Activated naive CD4-positive, alpha-beta T cell treated with anti-CD3 and anti-CD28 coated beads for 36 hours (primary cell): ENCODE measurements at regions of chr19 and their contacts with region 1.

Region 1: DNA sequence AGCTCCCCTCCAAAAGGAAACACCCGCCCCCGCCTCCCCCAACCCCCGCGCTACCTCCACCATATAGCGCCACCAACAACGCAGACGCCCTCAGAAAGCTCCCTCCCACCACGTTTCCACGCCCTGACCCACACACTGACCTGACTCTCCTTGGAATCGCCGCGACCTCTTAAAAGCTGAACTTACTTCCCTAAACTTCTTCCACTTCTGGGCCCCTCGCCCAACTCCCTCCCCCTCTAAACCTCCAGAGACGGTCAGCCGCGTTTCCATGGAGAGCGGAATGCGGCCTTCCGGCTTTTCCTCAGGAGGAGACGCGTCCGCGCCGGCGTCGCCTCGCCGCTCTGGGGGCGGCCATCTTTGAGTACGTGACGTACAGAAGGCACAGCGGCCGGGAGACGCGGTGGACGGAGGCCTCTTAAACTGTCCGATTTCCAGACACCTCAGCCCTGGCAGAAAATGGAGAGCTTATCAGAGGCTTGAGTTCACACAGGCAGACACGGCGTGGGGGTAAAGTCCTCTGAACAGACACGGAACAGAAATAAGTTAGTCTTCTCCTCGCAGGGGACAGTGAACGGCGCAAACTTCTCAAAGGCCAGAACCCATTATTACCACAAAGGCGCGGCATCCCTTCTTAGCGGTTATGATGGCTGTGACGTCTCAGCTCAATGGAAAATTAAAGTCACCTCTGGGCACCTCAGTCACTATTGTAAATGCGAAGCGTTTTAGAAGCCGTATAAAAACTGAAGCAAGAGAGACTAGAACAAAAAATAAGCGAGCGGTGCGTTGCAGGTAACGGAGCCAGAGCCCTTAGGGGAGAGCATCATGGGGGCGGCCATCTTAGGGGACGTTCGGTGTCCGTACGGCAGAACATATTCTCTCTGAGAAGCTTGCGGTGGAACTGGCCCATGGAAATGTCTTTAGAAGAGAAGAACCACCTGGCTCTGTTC is at the start of gene ZNF432:
- DNase-seq: peak; percentile 82
- H3K4me3 Mint-ChIP-seq: peak within 1 kb of the TSS; percentile 93
- H3K27ac Mint-ChIP-seq: peak within 1 kb of the TSS; percentile 99
- H3K4me1 Mint-ChIP-seq: peaks cover 11% of the 10 kb centered on the region
- H3K27me3 Mint-ChIP-seq: no peaks in the 10 kb centered on the region
- total RNA-seq, gene ZNF432: 6.2 to 6.7 TPM

Region 2: DNA sequence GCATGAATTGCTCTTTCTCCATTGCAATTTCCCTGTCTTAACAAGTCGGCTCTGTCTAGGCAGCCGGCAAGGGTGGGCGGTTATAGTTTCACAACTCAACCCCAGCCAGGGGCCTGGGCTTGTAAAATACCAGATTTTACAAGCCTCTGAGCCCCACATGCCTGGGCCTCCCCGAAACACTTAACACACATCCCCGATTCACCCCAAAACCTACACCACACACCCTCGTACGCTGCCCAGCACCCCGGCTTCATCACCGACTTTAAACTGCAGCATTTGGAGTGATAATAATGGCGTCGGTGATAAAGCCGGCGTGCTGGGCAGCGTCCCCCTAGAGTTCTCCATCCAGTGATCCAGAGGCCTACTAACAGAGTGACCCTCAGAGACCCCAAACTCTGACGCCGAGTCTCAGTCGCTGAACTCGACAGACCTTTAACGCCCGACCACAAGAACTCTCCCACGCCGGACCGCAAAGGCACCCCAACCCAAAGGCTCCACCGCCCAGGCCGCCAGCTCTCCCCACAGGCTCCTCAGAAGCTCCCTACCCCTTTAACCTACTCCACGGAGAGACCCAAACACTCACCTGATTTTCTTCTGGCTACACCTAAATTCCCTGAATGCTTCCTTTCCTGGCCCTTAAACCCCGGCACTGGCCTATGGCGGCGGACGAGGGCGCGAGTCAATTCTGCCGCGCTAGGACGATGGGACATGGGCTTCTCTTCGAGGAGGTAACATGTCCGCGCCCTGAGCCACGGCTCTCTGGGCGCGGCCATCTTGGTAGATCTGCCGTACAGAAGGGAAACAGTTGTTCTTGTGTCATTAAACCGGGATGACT is 144.3 kb before region 1 on chr19 and contains the start of gene ZNF649:
- CTCF ChIA-PET with region 1: no interaction called
- intact Hi-C with region 1: loop called (anchors 5 kb)
- DNase-seq: peak; percentile 90
- H3K4me3 Mint-ChIP-seq: peak within 1 kb of the TSS; percentile 96
- H3K27ac Mint-ChIP-seq: peak within 1 kb of the TSS; percentile 98
- H3K4me1 Mint-ChIP-seq: peaks cover 19% of the 10 kb centered on the region
- H3K27me3 Mint-ChIP-seq: peaks cover 22% of the 10 kb centered on the region
- total RNA-seq, gene ZNF649: 10.4 to 11.6 TPM

Region 3: GRCh38 chr19:51986309-51987291 is 62.2 kb before region 1 on chr19 and contains the start of gene ZNF350:
- CTCF ChIA-PET with region 1: no interaction called
- intact Hi-C with region 1: loop called (anchors 1 kb)
- DNase-seq: peak; percentile 96
- H3K4me3 Mint-ChIP-seq: peak within 1 kb of the TSS; percentile 85
- H3K27ac Mint-ChIP-seq: peak within 1 kb of the TSS; percentile 76
- H3K4me1 Mint-ChIP-seq: peaks cover 9% of the 10 kb centered on the region
- H3K27me3 Mint-ChIP-seq: no peaks in the 10 kb centered on the region
- total RNA-seq, gene ZNF350: 6.6 to 6.7 TPM

Region 4: GRCh38 chr19:52028027-52028779 is 20.6 kb before region 1 on chr19 and contains the start of gene ZNF614:
- CTCF ChIA-PET with region 1: interaction called, 4 read pairs
- intact Hi-C with region 1: loop called (anchors 1 kb)
- DNase-seq: peak; percentile 90
- H3K4me3 Mint-ChIP-seq: peak within 1 kb of the TSS; percentile 82
- H3K27ac Mint-ChIP-seq: peak within 1 kb of the TSS; percentile 91
- H3K4me1 Mint-ChIP-seq: peaks cover 26% of the 10 kb centered on the region
- H3K27me3 Mint-ChIP-seq: no peaks in the 10 kb centered on the region
- total RNA-seq, gene ZNF614: 7.5 to 8.2 TPM

Region 5: DNA sequence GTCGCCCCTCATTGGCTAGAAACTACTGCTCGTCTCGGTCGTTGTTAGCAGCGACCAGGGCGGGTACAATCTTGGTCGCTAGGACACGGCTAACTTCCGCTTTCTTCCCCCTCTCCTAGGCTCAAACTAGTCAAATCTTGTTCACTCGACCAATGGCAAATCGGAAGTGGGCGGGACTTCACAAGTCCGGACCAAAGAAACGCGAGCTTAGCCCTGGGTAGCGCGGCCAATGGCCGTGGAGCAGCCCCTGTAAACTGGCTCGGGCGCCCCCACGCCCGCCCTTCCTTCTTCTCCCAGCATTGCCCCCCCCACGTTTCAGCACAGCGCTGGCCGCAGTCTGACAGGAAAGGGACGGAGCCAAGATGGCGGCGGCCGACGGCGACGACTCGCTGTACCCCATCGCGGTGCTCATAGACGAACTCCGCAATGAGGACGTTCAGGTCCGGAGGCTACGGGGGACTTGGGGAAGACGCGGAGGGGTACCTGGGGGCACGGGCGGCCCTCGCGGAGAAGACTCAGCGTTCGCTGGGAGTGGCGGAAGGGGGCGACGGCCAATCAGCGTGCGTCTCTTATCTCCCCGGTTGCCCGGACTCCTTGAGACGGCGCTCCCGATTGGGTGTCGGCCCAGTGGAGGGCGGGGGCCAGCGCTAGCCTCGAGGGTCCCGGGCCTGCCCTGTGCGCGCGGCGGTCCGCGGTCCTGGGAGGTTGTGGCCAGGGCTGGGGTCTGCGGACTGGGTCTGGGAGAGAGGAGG is 141.1 kb after region 1 on chr19 and contains the start of gene PPP2R1A:
- CTCF ChIA-PET with region 1: no interaction called
- intact Hi-C with region 1: loop called (anchors 5 kb)
- DNase-seq: peak; percentile 99
- H3K4me3 Mint-ChIP-seq: peak within 1 kb of the TSS; percentile 85
- H3K27ac Mint-ChIP-seq: peak within 1 kb of the TSS; percentile 94
- H3K4me1 Mint-ChIP-seq: peaks cover 39% of the 10 kb centered on the region
- H3K27me3 Mint-ChIP-seq: no peaks in the 10 kb centered on the region
- total RNA-seq, gene PPP2R1A: 228 to 232 TPM